CD8-positive, alpha-beta T cell (primary cell): ENCODE measurements at regions of chr6 and their contacts with region 1.

Region 1: DNA sequence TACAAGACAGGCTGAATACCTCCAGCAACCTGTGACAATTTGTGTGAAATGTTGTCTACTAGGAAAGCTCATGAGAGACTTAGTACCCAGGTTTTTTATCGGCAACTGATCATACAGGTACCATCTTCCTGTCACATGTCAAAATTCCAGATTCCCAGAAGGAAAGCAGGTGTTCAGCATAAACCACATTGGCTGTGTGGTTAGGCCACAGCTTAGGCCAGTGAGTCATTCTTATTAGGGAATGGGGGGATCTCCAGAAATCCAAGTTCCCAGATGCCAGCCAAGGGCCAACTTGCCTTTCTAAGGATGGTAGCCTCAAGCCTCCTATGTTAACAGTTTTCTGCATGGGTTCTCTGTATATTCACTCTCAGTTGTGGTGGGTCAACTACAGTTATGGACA is 65.9 kb downstream of the FAM184A start:
- DNase-seq: no peak
- ATAC-seq: no peak
- H3K4me3 ChIP-seq: no peak overlapping the region
- H3K4me3 Mint-ChIP-seq: no peak overlapping the region
- H3K27ac ChIP-seq: no peak overlapping the region
- H3K27ac Mint-ChIP-seq: no peak overlapping the region
- H3K4me1 ChIP-seq: no peaks in the 10 kb centered on the region
- H3K4me1 Mint-ChIP-seq: no peaks in the 10 kb centered on the region
- H3K27me3 ChIP-seq: no peaks in the 10 kb centered on the region
- H3K27me3 Mint-ChIP-seq: no peaks in the 10 kb centered on the region
- CTCF ChIP-seq: no peak

Region 2: DNA sequence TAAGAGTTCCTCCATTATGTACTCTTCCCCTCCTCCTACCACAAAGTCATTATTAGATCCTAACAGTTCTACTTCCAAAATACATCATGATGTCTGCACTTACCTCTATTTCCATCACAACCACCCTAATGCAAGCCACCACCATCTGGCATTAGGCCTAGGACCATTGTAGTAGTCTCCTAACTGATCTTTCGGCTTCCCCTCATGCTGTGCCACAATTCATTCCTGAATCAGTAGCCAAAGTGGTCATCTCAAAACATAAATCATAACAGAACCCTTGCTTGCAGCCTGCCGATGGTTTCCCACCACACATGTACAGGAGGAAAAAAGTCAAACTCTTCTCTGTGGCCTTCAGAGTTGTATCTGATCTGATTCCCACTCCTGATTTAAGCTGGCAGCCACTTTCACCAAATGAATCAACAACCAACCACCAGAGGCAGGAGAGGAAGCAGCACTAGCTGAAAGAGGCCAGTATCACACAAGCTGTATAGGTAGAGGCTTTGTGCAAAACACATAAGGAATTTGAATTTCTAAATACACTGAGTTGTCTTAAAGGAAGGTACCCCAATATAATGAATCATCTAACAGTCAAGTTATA is 39.9 kb after region 1 on chr6:
- CTCF ChIA-PET with region 1: no interaction called
- POLR2A ChIA-PET with region 1: no interaction called
- intact Hi-C with region 1: no loop called
- DNase-seq: peak in 2 of 9 experiments; percentile 7 to 9
- ATAC-seq: peak; percentile 26
- H3K4me3 ChIP-seq: no peak overlapping the region
- H3K4me3 Mint-ChIP-seq: no peak overlapping the region
- H3K27ac ChIP-seq: no peak overlapping the region
- H3K27ac Mint-ChIP-seq: peak overlapping the region; percentile 60
- H3K4me1 ChIP-seq: no peaks in the 10 kb centered on the region
- H3K4me1 Mint-ChIP-seq: peaks cover 9% of the 10 kb centered on the region
- H3K27me3 ChIP-seq: no peaks in the 10 kb centered on the region
- H3K27me3 Mint-ChIP-seq: no peaks in the 10 kb centered on the region
- CTCF ChIP-seq: no peak

Region 3: GRCh38 chr6:120010075-120010474 is 997.6 kb after region 1 on chr6:
- CTCF ChIA-PET with region 1: no interaction called
- POLR2A ChIA-PET with region 1: no interaction called
- intact Hi-C with region 1: loop called in 1 of 2 experiments (anchors 10 kb)
- DNase-seq: no peak
- ATAC-seq: no peak
- H3K4me3 ChIP-seq: no peak overlapping the region
- H3K4me3 Mint-ChIP-seq: no peak overlapping the region
- H3K27ac ChIP-seq: no peak overlapping the region
- H3K27ac Mint-ChIP-seq: no peak overlapping the region
- H3K4me1 ChIP-seq: no peaks in the 10 kb centered on the region
- H3K4me1 Mint-ChIP-seq: no peaks in the 10 kb centered on the region
- H3K27me3 ChIP-seq: no peaks in the 10 kb centered on the region
- H3K27me3 Mint-ChIP-seq: peaks cover 3% of the 10 kb centered on the region
- CTCF ChIP-seq: no peak